ENCODE measurements at regions of chr6 and their contacts with region 1.

Region 1: DNA sequence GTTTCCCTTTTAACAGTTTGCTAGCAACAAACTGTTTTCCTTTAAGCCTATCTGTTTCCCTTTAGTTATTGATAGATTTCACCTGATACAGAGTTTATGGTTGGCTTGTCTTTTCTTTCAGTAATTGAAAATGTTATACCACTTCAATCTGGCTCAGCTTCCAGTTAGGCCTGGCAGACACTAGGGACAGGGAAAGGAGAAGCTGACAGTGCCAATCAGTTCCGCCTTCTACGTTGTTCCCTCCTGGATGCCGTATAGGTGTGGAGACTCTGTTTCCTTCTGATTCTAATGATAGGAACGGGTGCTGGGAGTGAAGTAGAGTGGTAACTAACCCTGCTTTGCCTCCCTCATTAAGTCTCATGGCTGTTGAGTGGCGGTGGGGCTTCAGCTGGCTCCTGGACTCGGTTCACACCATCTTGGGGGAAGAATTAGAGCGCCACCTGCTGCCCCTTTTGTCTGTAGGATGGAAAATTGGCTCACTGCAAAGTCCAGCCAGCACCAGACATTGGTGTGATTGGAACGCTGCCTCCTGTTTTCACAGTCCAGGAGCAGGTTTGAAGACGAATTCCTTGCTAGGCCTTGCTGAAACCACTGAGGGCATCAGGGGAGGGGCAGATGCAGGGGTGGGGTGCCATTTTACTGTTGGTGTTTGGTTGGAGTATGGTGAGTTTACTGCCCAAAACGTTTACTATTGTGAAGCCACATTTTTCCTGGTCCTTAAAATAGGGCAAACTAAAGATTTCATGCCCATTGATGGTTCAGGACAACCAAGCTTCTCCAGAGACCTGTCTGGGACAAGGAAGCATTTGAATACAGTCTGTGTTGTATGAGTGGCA is 1729.5 kb downstream of the GRIK2 start:
- DNase-seq: peak; percentile 13
- ATAC-seq: peak; percentile 84
- H3K4me3 ChIP-seq: no peak overlapping the region
- H3K27ac ChIP-seq: peak overlapping the region; percentile 23; the same call in 1 of the 2 replicates
- H3K4me1 ChIP-seq: no peaks in the 10 kb centered on the region
- H3K27me3 ChIP-seq: no peaks in the 10 kb centered on the region
- CTCF ChIP-seq: peak; percentile 81

Region 2: GRCh38 chr6:102853269-102853955 is 269.6 kb before region 1 on chr6:
- CTCF ChIA-PET with region 1: no interaction called
- POLR2A ChIA-PET with region 1: no interaction called
- in situ Hi-C with region 1: no loop called
- intact Hi-C with region 1: loop called (anchors 5 kb)
- DNase-seq: no peak
- ATAC-seq: peak; percentile 78; the same call in 1 of the 2 replicates
- H3K4me3 ChIP-seq: no peak overlapping the region
- H3K27ac ChIP-seq: peak overlapping the region; percentile 66; the same call in 1 of the 2 replicates
- H3K4me1 ChIP-seq: no peaks in the 10 kb centered on the region; the same call in 1 of the 2 replicates
- H3K27me3 ChIP-seq: no peaks in the 10 kb centered on the region
- CTCF ChIP-seq: no peak; the same call in 1 of the 2 replicates

Region 3: GRCh38 chr6:103085801-103086200 is 37.2 kb before region 1 on chr6:
- CTCF ChIA-PET with region 1: interaction called, 11 read pairs
- POLR2A ChIA-PET with region 1: no interaction called
- in situ Hi-C with region 1: no loop called
- intact Hi-C with region 1: no loop called
- DNase-seq: no peak
- ATAC-seq: no peak
- H3K4me3 ChIP-seq: no peak overlapping the region
- H3K27ac ChIP-seq: no peak overlapping the region
- H3K4me1 ChIP-seq: no peaks in the 10 kb centered on the region
- H3K27me3 ChIP-seq: no peaks in the 10 kb centered on the region
- CTCF ChIP-seq: no peak

Region 4: GRCh38 chr6:103356531-103356930 is 233.5 kb after region 1 on chr6:
- CTCF ChIA-PET with region 1: no interaction called
- POLR2A ChIA-PET with region 1: no interaction called
- in situ Hi-C with region 1: no loop called
- intact Hi-C with region 1: no loop called
- DNase-seq: no peak
- ATAC-seq: no peak
- H3K4me3 ChIP-seq: no peak overlapping the region
- H3K27ac ChIP-seq: no peak overlapping the region
- H3K4me1 ChIP-seq: no peaks in the 10 kb centered on the region
- H3K27me3 ChIP-seq: no peaks in the 10 kb centered on the region
- CTCF ChIP-seq: no peak